Dendritic cell treated with granulocyte-macrophage colony-stimulating factor and Interleukin-4, amounts not matched to agents 40 ng/mL and 50 ng/mL, for 4 days (primary cell): ENCODE measurements at regions of chr1 and their contacts with region 1.

Region 1: GRCh38 chr1:36369061-36369861 is 16.5 kb downstream of the STK40 start:
- H3K4me3 Mint-ChIP-seq: no peak overlapping the region
- H3K27ac Mint-ChIP-seq: peak overlapping the region; percentile 97
- H3K4me1 Mint-ChIP-seq: peaks cover 85% of the 10 kb centered on the region
- H3K27me3 Mint-ChIP-seq: no peaks in the 10 kb centered on the region

Region 2: DNA sequence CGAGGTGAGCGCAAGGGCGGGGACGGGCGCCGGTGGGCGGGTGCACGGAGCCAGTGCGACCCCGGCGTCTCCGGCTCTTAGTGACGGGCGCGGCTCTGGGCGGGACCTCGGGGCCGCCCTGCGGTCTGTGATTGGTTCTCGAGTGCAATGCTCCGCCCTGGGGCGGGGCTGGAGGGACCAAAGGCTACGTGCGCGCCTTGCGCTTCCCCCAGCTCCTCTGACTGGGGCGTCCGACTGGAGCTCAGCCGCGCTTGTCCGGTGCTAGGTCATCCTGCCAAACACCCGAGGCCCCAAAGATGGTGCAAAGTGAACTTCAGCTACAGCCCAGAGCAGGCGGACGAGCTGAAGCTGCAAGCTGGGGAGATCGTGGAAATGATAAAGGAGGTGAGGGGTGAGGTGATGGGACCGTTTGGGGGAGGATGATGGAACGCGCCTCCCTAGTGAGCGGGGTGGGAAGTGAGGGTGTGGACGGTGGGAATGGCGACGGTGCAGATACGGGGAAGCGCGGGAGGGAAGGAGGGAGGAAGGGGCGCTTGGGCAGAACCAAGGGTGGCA is 62.3 kb before region 1 on chr1:
- intact Hi-C with region 1: loop called (anchors 5 kb)
- H3K4me3 Mint-ChIP-seq: peak overlapping the region; percentile 92
- H3K27ac Mint-ChIP-seq: peak overlapping the region; percentile 41
- H3K4me1 Mint-ChIP-seq: peaks cover 52% of the 10 kb centered on the region
- H3K27me3 Mint-ChIP-seq: peaks cover 9% of the 10 kb centered on the region

Region 3: DNA sequence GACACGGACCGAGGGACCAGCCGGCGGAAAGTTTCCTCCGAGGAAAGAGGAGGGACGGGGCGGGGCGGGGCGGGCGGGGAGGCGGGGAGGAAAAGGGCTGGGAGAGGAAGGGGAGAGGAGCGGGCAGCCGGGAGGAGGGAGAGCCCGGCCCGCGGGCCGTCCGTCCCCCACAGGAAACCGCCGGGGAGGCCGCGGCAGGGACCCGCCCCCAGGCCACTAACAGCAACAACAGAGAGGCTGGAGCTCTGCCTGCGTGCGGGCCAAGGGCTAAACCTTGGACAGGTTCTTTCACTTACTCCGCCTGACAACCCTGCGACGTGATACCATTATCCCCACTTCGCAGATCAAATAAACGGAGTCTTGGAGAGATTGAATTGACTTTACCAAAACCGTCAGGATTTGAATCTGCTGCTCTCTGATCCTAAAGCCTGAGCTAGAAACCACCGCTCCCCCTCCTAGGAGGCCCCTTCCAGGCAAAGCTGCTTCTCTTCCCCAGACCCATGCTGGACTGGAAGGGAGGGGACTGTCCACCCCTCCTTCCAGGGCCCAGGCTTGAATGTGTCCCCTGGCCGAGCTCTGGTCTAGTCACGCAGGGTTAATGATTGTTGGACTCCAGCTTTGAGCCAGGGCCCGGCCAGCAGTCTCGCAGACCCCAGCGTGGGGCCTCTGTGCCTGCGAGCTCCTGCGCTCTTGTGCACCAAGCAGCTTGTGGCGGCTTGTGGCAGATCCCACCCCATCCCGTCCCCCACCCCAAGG is 45.5 kb before region 1 on chr1 and contains the start of gene EVA1B:
- intact Hi-C with region 1: loop called (anchors 5 kb)
- H3K4me3 Mint-ChIP-seq: peak within 1 kb of the TSS; percentile 72
- H3K27ac Mint-ChIP-seq: peak within 1 kb of the TSS; percentile 78
- H3K4me1 Mint-ChIP-seq: peaks cover 62% of the 10 kb centered on the region
- H3K27me3 Mint-ChIP-seq: peaks cover 40% of the 10 kb centered on the region

Region 4: DNA sequence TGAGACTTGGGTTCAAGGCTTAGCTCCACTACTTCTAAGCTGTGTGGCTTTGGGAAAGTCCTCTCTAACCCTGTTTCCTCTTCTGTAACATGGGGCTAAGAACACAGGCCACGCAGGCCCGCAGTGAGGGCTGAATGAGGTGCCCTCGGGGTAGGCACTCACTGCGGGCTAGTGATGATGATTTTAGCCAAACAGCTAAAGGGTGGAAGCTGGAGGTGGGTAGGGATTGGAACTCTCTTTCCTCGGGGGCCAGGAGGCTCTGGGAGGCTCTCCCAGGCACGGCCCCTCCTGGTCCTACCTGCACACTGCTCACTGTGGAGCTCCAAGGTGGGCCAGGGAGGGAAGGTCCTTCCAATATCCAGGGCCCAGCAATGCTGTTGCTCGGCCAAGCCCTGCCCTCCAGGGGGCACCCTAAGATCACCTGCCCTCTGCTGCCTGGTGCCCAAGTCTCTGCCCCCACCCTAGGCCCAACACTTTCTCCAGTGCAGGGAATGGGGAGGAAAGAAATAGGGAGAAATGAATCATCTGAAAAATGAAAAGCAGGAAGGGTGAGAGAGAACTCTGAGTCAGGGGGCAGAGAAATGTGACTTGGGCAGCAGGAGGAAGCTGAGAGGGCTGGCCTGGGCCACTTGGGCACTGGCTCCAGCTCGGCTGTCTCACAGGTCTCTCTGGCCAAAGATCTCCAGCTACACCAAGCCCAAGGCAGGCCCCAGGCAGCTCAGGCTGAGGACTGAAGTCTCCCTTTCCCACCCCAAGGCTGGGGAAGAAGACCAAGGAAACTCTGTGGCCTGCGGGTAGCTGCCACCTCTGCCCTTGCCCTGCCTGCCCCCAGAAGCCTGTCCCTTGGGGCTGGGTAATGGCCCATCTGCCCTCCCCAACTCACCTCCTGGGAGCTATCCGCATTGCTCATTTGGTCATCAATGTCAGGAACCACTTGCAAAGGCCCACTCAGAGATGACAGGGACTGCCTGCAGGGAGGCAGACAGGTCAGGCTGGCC is 26.5 kb before region 1 on chr1:
- intact Hi-C with region 1: loop called (anchors 1 kb)
- H3K4me3 Mint-ChIP-seq: no peak overlapping the region
- H3K27ac Mint-ChIP-seq: peak overlapping the region; percentile 35
- H3K4me1 Mint-ChIP-seq: peaks cover 57% of the 10 kb centered on the region
- H3K27me3 Mint-ChIP-seq: no peaks in the 10 kb centered on the region

Region 5: DNA sequence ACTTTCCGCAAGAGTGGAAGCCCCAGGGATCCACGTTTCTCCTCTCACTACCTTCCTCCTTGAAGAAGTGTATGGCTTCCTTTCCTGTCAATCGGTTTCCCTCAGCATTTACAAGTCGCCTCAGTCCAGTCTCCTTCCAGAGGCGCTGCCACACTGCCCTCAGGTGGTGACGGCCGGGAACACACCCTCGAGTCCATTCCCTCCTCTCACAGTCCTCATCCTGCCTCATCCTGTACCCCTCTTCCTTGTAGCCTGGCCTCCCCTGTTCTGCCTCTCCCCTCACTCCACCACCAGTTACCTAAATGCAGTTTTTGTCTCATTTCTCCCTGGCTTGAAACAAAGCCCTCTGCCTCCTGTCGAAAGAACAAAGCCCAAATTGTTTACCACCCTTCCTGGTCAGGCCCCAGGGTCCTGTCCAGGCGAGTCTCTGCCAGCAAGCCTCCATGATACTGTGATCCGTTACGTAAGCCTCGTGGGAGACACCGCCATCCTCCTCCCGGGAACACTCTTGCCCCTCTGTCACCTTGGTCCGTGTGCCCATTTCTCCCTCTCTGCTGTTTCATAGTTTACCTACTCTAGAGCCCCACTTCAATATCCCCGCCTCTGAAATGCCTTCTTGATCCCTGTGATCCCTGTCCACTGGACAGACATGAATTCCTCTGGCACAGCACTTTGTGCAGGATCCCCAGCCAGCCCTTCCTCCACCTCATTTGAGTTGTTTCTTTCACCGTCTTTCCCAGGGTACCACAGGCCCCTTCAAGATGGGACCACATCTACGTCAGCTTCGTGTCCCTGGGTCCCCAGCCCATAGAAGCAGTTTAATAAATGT is 51.8 kb after region 1 on chr1:
- intact Hi-C with region 1: loop called (anchors 2 kb)
- H3K4me3 Mint-ChIP-seq: no peak overlapping the region
- H3K27ac Mint-ChIP-seq: peak overlapping the region; percentile 30
- H3K4me1 Mint-ChIP-seq: peaks cover 9% of the 10 kb centered on the region
- H3K27me3 Mint-ChIP-seq: no peaks in the 10 kb centered on the region

Region 6: DNA sequence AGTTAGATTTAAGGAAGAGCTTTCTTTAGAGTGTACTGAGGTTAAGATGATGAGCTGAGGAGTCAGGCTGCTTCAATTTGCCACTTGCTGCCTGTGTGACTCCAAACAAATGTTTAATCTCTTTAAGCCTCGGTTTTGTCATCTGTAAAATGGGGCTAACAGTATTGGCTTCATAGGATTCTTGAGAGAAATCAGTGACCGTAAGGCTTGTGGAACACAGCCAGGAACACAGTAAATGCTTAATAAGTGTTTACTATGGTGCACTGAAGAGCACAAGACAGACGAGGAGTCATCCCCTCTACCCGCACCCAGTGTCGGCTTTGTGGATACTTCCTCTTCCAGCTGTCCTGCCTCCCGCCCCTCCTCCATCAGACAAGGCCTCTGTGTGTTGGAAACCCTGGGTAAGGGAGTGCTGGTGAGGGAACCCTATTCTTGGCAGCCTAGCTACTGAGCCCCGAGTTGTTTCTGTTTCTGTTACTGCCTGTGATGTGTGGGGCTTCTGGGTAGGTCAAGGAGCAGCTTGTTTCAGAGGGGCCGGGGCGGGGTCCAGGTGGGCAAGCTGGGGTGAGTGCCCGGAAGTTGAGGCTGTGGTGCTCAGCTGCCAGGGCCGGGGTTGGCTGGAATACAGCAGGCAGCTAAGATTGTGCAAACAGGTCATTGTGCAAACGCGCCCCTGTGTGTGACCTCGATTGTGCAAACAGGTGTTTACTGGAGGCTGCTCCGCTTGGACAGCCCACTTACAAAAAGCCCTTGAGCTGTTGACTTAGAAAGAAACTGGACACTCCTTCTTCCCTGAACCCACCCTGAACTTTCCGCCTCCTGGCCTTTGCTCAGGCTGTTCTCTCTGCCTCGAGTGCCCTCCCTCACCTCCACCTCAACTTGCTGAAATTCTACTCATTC is 117.4 kb after region 1 on chr1:
- intact Hi-C with region 1: no loop called
- H3K4me3 Mint-ChIP-seq: peak overlapping the region; percentile 64
- H3K27ac Mint-ChIP-seq: peak overlapping the region; percentile 91
- H3K4me1 Mint-ChIP-seq: peaks cover 76% of the 10 kb centered on the region
- H3K27me3 Mint-ChIP-seq: no peaks in the 10 kb centered on the region

Region 7: GRCh38 chr1:36594023-36594422 is 224.8 kb after region 1 on chr1:
- intact Hi-C with region 1: no loop called
- H3K4me3 Mint-ChIP-seq: no peak overlapping the region
- H3K27ac Mint-ChIP-seq: no peak overlapping the region
- H3K4me1 Mint-ChIP-seq: no peaks in the 10 kb centered on the region
- H3K27me3 Mint-ChIP-seq: peaks cover 38% of the 10 kb centered on the region